WTC11 (cell line): ENCODE measurements at regions of chr1 and their contacts with region 1.

Region 1: DNA sequence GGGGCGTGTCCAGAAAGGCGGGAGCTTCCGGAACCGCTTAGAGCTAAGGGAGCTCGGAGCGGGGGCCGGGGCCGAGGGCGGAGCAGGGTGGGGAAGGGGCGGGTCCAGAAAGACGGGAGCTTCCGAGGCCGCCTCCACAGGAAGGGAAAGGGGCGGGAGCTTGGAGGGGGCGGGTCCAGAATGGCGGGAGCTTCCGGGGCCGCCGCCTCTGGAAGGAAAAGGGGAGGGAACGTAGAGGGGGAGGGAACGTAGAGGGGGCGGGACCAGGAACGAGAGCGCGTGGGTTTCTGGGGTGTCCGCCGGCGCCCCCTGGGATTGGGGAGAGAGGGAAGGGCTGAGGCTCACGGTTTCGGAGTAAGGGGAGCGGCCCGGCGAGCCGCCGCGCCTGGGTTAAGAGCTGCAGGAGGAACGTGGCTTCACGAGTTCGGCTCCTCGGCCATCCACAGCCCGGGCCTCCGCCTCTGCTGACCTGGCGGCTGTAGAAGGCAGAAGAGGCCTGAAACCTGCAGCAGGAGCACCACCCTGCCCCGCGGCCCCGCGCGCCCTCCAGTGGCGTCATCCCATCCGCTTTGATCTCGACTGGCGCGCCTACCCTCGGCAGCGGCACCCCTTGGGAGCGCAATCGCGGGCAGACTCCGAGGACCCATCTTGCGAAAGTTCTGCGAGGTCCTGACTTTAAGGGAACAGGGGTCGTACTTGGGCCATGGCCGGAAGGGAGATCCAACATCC is 22.9 kb upstream of the HPDL start:
- DNase-seq: peak; percentile 99
- ATAC-seq: peak; percentile 90
- H3K4me3 Mint-ChIP-seq: peak overlapping the region; percentile 86
- H3K27ac Mint-ChIP-seq: peak overlapping the region; percentile 91
- H3K4me1 Mint-ChIP-seq: peaks cover 53% of the 10 kb centered on the region
- H3K27me3 Mint-ChIP-seq: no peaks in the 10 kb centered on the region
- CTCF ChIP-seq: peak; percentile 37; the same call in 1 of the 2 replicates

Region 2: GRCh38 chr1:45011837-45012638 is 291.7 kb before region 1 on chr1 and contains the start of gene UROD:
- CTCF ChIA-PET with region 1: interaction called, 317 read pairs
- POLR2A ChIA-PET with region 1: interaction called, 11 read pairs
- DNase-seq: peak; percentile 94
- ATAC-seq: peak; percentile 63
- H3K4me3 Mint-ChIP-seq: peak within 1 kb of the TSS; percentile 68
- H3K27ac Mint-ChIP-seq: peak within 1 kb of the TSS; percentile 77
- H3K4me1 Mint-ChIP-seq: peaks cover 21% of the 10 kb centered on the region
- H3K27me3 Mint-ChIP-seq: peaks cover 5% of the 10 kb centered on the region; the same call in 1 of the 2 replicates
- CTCF ChIP-seq: no peak
- total RNA-seq, gene UROD: 95.2 to 118 TPM (median 96.0 TPM) in 3 replicates

Region 3: GRCh38 chr1:45266151-45266801 is 37.5 kb before region 1 on chr1:
- CTCF ChIA-PET with region 1: no interaction called
- POLR2A ChIA-PET with region 1: no interaction called
- DNase-seq: no peak
- ATAC-seq: no peak
- H3K4me3 Mint-ChIP-seq: no peak overlapping the region
- H3K27ac Mint-ChIP-seq: no peak overlapping the region; the same call in 1 of the 2 replicates
- H3K4me1 Mint-ChIP-seq: no peaks in the 10 kb centered on the region
- H3K27me3 Mint-ChIP-seq: peaks cover 6% of the 10 kb centered on the region
- CTCF ChIP-seq: no peak

Region 4: DNA sequence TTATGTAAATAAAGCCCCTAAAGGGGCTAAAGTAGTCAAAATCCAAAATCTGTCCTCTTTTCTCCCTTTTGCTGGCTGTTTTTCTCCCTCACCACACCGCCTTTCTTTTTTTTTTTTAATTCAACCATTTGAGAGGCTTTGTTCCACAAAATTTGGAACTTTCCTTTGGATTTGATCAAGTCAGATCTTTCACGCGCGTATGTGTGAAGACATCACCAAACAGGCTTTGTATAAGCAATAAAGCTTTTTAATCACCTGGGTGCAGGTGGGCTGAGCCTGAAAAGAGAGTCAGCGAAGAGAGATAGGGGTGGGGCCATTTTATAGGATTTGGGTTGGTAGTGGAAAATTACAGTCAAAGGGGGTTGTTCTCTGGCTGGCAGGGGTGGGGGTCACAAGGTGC is 17.7 kb after region 1 on chr1:
- CTCF ChIA-PET with region 1: interaction called, 24 read pairs
- POLR2A ChIA-PET with region 1: interaction called, 52 read pairs
- DNase-seq: no peak
- ATAC-seq: no peak; the same call in 1 of the 2 replicates
- H3K4me3 Mint-ChIP-seq: peak overlapping the region; percentile 50
- H3K27ac Mint-ChIP-seq: peak overlapping the region; percentile 98
- H3K4me1 Mint-ChIP-seq: peaks cover 32% of the 10 kb centered on the region
- H3K27me3 Mint-ChIP-seq: no peaks in the 10 kb centered on the region; the same call in 1 of the 2 replicates
- CTCF ChIP-seq: no peak

Region 5: GRCh38 chr1:45339789-45340570 is 36.2 kb after region 1 on chr1 and contains the starts of genes MUTYH and TOE1:
- CTCF ChIA-PET with region 1: interaction called, 47 read pairs
- POLR2A ChIA-PET with region 1: interaction called, 18 read pairs
- DNase-seq: peak; percentile 98
- ATAC-seq: peak; percentile 93
- H3K4me3 Mint-ChIP-seq: peak within 1 kb of the TSS; percentile 100
- H3K27ac Mint-ChIP-seq: peak within 1 kb of the TSS; percentile 99
- H3K4me1 Mint-ChIP-seq: peaks cover 32% of the 10 kb centered on the region
- H3K27me3 Mint-ChIP-seq: no peaks in the 10 kb centered on the region
- CTCF ChIP-seq: no peak
- total RNA-seq, gene MUTYH: 58.3 to 67.2 TPM (median 65.7 TPM) in 3 replicates
- total RNA-seq, gene TOE1: 7.4 to 10.9 TPM (median 10.0 TPM) in 3 replicates

Region 6: DNA sequence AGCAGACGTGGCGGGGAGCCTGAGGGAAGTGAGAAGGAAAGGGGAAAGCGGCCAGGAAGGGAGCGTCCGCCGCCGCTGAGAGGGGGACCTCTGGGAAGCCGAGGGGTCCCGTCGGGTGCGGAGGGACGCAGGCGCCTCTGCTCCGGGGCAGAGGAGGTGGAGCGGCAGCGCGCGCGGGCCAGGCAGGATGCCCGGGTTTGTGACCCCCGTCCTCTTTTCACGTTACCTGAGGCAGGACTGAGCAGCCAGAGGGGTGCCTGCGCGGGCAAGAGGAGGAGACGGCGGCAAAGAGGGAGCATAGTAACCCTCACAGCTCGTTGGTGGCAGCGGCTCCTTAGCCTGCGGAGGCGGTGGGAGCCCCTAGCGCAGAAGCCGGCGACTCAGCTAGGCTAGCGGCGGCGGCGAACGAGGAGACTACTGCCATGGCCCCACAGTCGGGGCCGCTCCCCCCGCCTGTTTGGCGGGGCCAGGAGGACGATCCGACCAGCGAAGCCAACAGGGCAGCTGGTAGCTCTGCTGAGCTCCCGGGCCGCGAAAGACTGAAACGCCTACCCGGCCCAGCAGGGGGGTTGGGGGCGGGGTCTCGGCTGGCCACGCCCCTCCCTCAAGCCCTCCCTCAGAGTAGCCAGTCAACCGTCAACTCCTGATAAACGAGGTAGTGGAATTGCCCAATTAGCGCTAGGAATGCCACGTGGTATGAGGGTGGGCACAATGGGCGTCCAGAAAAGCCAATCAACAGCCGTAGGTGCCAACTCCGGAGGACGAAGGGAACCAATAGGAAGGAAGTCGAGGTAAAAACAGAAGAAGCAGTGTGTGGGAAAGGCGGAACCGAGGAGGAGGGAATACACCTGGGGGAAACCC is 187.1 kb after region 1 on chr1 and contains the start of gene TESK2:
- CTCF ChIA-PET with region 1: interaction called, 31 read pairs
- POLR2A ChIA-PET with region 1: interaction called, 6 read pairs
- DNase-seq: peak; percentile 98
- ATAC-seq: peak; percentile 95
- H3K4me3 Mint-ChIP-seq: no peak within 1 kb of the TSS
- H3K27ac Mint-ChIP-seq: no peak within 1 kb of the TSS
- H3K4me1 Mint-ChIP-seq: peaks cover 5% of the 10 kb centered on the region; the same call in 1 of the 2 replicates
- H3K27me3 Mint-ChIP-seq: no peaks in the 10 kb centered on the region
- CTCF ChIP-seq: no peak
- total RNA-seq, gene TESK2: 13.1 to 14.2 TPM (median 13.3 TPM) in 3 replicates